A549 (cell line): ENCODE measurements at regions of chr10 and their contacts with region 1.

Region 1: DNA sequence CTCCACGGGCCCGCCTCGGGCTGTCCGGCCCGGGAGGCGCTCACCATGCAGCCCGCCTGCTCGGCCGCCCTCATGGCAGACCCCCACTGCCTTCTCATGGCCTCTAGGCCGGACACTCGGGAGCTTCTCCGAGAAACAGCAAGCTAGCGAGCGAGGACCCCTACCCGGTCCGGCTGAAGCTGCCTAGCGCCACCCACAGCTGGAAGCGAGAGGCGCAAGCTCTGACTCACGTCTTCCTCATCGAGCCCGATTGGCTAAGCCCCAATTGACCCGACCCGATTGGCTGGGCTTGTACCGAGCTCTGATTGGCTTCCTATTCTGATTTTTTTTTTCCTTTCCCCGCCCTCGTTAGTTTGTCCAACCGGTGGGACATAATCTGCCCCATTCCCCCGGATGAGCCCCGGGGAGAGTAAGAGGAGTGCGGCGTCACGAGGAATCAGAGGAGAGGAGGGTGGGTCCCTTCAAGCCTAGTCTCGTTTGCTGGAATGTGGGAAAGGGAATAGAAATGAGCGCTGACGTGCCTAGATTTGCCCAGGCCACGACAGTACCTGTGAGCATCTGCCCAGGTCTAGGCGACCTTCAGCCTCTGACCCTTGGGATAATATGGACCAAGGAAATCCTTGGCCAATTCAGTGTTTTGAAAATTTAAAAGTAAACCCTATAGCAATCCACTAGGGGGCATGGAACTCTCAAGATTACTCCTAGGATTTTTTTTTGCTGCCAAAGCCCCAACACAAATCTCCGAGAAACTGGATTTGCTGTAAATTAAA is at the start of gene TYSND1:
- DNase-seq: peak; percentile 98 to 99
- ATAC-seq: peak; percentile 80 to 89
- H3K4me3 ChIP-seq: peak within 1 kb of the TSS; percentile 79
- H3K27ac ChIP-seq: peak within 1 kb of the TSS; percentile 95 to 96
- H3K4me1 ChIP-seq: peaks cover 18% of the 10 kb centered on the region
- CTCF ChIP-seq: peak; percentile 64
- EP300 ChIP-seq: no peak
- POLR2A ChIP-seq: peak; percentile 89
- RAD21 ChIP-seq: peak; percentile 55 to 73
- polyA plus RNA-seq, gene TYSND1: 10.9 and 12.6 TPM in 2 replicates

Region 2: DNA sequence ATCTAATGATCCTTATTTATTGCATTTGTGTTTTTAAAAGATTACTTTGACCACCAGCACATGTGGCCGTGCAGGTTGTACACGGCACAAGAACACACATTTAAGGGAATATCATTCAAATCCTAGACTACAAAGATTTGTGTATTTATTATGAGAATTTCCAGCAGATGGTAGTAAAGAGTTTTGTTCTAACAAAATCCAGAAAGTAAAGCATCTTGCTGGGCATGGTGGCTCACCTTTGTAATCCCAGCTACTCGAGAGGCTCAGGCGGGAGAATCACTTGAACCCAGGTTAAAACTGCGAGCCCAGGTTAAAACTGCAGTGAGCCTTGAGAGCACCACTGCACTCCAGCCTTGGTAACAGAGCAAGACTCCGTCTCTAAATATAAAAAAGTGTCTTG is 62.5 kb before region 1 on chr10:
- CTCF ChIA-PET with region 1: interaction called, 24 read pairs
- POLR2A ChIA-PET with region 1: interaction called, 5 read pairs
- DNase-seq: peak in 1 of 2 experiments; percentile 28
- ATAC-seq: peak in 1 of 2 experiments; percentile 51; a peak in 3 of 6 replicates
- H3K4me3 ChIP-seq: no peak overlapping the region
- H3K27ac ChIP-seq: peak overlapping the region in 1 of 2 experiments; percentile 60; a peak in 3 of 6 replicates
- H3K4me1 ChIP-seq: peaks cover 38% of the 10 kb centered on the region
- CTCF ChIP-seq: peak; percentile 46
- EP300 ChIP-seq: no peak
- POLR2A ChIP-seq: no peak
- RAD21 ChIP-seq: peak; percentile 37 to 46; a peak in 3 of 5 replicates

Region 3: GRCh38 chr10:70115948-70116682 is 30.6 kb before region 1 on chr10:
- CTCF ChIA-PET with region 1: interaction called, 228 read pairs
- POLR2A ChIA-PET with region 1: interaction called, 11 read pairs
- DNase-seq: peak; percentile 45 to 64
- ATAC-seq: peak; percentile 76 to 86
- H3K4me3 ChIP-seq: no peak overlapping the region
- H3K27ac ChIP-seq: no peak overlapping the region
- H3K4me1 ChIP-seq: no peaks in the 10 kb centered on the region
- CTCF ChIP-seq: peak; percentile 75
- EP300 ChIP-seq: no peak
- POLR2A ChIP-seq: no peak
- RAD21 ChIP-seq: peak; percentile 44 to 49

Region 4: DNA sequence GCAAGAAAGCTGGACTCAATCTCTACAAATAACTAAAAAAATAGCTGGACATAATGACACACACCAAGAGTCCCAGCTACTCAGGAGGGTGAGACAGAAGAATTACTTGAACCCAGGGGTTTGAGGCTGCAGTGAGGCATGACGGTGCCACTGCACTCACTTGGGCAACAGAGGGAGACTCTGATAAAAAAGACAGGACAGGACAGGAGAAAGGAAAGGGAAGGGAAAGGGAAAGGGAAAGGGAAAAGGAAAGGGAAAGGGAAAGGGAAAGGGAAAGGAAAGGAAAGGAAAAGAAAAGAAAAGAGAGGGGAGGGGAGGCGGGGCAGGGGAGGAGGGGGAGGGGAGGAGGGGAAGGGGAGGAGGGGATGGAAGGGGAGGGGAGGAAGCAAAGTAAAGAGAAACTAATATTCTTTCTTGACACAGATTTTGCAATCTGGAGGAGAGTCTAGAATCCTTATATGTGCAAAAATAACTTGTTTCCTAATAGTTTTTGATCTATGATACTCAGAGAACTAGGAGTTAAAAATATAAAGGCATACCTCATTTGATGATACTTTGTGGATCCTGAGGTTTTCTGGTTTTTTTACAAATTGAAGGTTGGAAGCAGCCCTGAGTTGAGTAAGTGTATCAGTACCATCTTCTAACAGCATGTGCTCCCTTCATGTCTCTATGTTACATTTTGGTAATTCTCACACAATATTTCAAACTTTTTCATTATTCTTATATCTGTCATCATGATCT is 15.6 kb after region 1 on chr10:
- CTCF ChIA-PET with region 1: interaction called, 34 read pairs
- POLR2A ChIA-PET with region 1: interaction called, 18 read pairs
- DNase-seq: no peak
- ATAC-seq: no peak
- H3K4me3 ChIP-seq: no peak overlapping the region
- H3K27ac ChIP-seq: no peak overlapping the region
- H3K4me1 ChIP-seq: peaks cover 36% of the 10 kb centered on the region
- CTCF ChIP-seq: no peak
- EP300 ChIP-seq: no peak
- POLR2A ChIP-seq: no peak
- RAD21 ChIP-seq: no peak

Region 5: GRCh38 chr10:70176441-70176840 is 29.8 kb after region 1 on chr10:
- CTCF ChIA-PET with region 1: interaction called, 33 read pairs
- POLR2A ChIA-PET with region 1: interaction called, 52 read pairs
- DNase-seq: no peak
- ATAC-seq: no peak
- H3K4me3 ChIP-seq: no peak overlapping the region
- H3K27ac ChIP-seq: no peak overlapping the region
- H3K4me1 ChIP-seq: no peaks in the 10 kb centered on the region
- CTCF ChIP-seq: no peak
- EP300 ChIP-seq: no peak
- POLR2A ChIP-seq: no peak
- RAD21 ChIP-seq: no peak